HEK293 (cell line): ENCODE measurements at regions of chr9 and their contacts with region 1.

Region 1: DNA sequence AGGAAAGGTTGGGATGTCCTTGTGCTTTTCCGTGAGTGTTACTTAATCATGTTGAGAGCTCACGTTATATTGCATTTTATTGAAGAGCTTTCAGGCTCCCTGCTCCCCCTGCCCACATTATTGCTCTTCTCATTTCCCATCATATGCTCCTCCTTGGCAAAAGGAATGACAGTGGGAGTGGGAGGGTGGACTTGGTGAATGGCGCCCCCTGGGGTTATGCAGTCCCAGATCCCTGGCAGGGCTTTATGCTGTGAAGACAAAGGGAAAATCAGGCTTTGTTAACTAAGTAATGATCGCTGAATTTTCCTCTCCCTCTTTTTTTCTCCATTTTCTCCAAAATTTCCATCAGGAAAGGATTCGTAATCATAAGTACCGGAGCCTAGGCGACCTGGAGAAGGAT is 166.6 kb downstream of the SMARCA2 start:
- H3K4me3 ChIP-seq: no peak overlapping the region
- H3K27ac ChIP-seq: no peak overlapping the region
- H3K4me1 ChIP-seq: no peaks in the 10 kb centered on the region
- CTCF ChIP-seq: no peak

Region 2: DNA sequence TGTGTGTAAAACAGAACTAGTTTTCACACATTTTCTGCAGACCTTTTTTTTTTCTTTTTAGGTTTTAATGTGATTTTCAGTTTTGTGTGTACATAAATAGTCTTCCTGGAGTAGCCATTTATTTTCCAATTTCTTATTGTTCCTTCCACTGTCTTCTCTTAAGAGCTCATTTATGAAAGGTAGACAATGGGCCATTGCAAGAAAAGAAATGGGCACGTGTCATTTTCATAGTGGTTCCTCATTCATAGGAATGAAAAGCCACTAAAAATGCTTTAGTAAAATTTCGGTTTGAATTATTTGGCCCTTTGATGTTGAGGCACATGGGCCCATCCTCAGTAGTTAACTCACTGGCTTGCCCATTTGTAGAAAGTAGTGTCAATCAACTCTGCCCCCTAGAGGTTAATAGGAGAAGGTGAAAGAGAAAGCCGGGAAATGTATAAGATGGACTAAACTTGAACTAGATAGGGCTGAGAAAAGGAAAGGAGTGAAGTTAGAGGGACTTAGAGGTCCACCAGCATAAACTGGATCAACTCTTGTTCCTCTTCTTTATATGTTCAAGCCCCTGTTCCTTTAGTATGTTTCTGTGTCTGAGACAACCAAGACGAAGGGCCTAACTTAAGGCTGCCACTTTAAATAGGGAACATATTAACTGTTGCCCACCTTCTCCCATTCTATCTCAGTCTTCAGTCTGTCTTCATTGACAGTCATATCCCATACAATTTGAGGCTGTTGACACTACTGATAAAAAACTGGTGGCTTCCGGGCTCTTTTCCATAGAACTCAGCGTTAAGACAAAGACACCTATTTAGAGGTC is 94.1 kb before region 1 on chr9:
- CTCF ChIA-PET with region 1: no interaction called
- POLR2A ChIA-PET with region 1: no interaction called
- H3K4me3 ChIP-seq: no peak overlapping the region
- H3K27ac ChIP-seq: no peak overlapping the region
- H3K4me1 ChIP-seq: no peaks in the 10 kb centered on the region
- CTCF ChIP-seq: no peak

Region 3: GRCh38 chr9:2166203-2166602 is 15.6 kb before region 1 on chr9:
- CTCF ChIA-PET with region 1: interaction called, 15 read pairs
- POLR2A ChIA-PET with region 1: no interaction called
- H3K4me3 ChIP-seq: no peak overlapping the region
- H3K27ac ChIP-seq: no peak overlapping the region
- H3K4me1 ChIP-seq: no peaks in the 10 kb centered on the region; the same call in 1 of the 2 replicates
- CTCF ChIP-seq: no peak